ENCODE measurements at regions of chr19 and their contacts with region 1.

Region 1: GRCh38 chr19:55503502-55504251 is 15.4 kb downstream of the SSC5D start:
- DNase-seq: peak; percentile 86 to 98 (median 93)
- ATAC-seq: peak; percentile 94
- H3K4me3 ChIP-seq: peak overlapping the region; percentile 57 to 66
- H3K4me3 Mint-ChIP-seq: peak overlapping the region; percentile 77
- H3K27ac ChIP-seq: peak overlapping the region; percentile 49 to 75
- H3K27ac Mint-ChIP-seq: peak overlapping the region; percentile 80
- H3K4me1 ChIP-seq: peaks cover 4% of the 10 kb centered on the region
- H3K4me1 Mint-ChIP-seq: peaks cover 12% of the 10 kb centered on the region
- H3K27me3 ChIP-seq: peaks cover 0 to 2% of the 10 kb centered on the region in 2 experiments
- H3K27me3 Mint-ChIP-seq: peaks cover 2% of the 10 kb centered on the region
- CTCF ChIP-seq: peak; percentile 99

Region 2: GRCh38 chr19:54882758-54883157 is 620.9 kb before region 1 on chr19:
- CTCF ChIA-PET with region 1: no interaction called
- POLR2A ChIA-PET with region 1: no interaction called
- intact Hi-C with region 1: loop called in 1 of 2 experiments (anchors 5 kb)
- DNase-seq: peak in 2 of 9 experiments; percentile 48 to 67
- ATAC-seq: no peak
- H3K4me3 ChIP-seq: no peak overlapping the region
- H3K4me3 Mint-ChIP-seq: no peak overlapping the region
- H3K27ac ChIP-seq: peak overlapping the region in 1 of 2 experiments; percentile 59
- H3K27ac Mint-ChIP-seq: no peak overlapping the region
- H3K4me1 ChIP-seq: no peaks in the 10 kb centered on the region
- H3K4me1 Mint-ChIP-seq: peaks cover 4% of the 10 kb centered on the region
- H3K27me3 ChIP-seq: no peaks in the 10 kb centered on the region
- H3K27me3 Mint-ChIP-seq: peaks cover 31% of the 10 kb centered on the region
- CTCF ChIP-seq: no peak

Region 3: DNA sequence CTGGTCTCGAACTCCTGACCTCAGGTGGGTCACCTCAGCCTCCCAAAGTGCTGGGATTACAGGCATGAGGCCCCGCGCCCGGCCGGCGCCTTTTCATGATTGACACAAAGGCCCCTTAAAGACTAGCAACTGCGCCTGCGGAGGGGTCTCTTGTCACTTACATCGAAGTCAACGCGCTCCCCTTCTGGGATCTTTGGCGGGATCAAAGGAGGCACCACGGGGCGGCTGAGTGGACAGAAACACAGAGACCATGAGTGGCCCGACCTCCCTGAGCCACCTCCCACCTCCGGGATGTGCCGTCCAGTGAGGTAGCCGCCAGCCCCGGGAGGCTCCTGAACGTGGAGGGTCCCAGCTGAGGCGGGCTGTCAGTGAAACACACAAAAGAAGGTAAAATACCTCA is 362.0 kb before region 1 on chr19:
- CTCF ChIA-PET with region 1: interaction called, 65 read pairs
- POLR2A ChIA-PET with region 1: interaction called, 5 read pairs
- intact Hi-C with region 1: loop called in 1 of 2 experiments (anchors 1 kb)
- DNase-seq: no peak
- ATAC-seq: no peak
- H3K4me3 ChIP-seq: no peak overlapping the region
- H3K4me3 Mint-ChIP-seq: no peak overlapping the region
- H3K27ac ChIP-seq: no peak overlapping the region
- H3K27ac Mint-ChIP-seq: no peak overlapping the region
- H3K4me1 ChIP-seq: peaks cover 6% of the 10 kb centered on the region
- H3K4me1 Mint-ChIP-seq: peaks cover 3% of the 10 kb centered on the region
- H3K27me3 ChIP-seq: peaks cover 22 to 58% of the 10 kb centered on the region in 2 experiments
- H3K27me3 Mint-ChIP-seq: peaks cover 47% of the 10 kb centered on the region
- CTCF ChIP-seq: no peak

Region 4: GRCh38 chr19:55461259-55461973 is 42.3 kb before region 1 on chr19 and contains the start of gene ISOC2:
- CTCF ChIA-PET with region 1: interaction called, 72 read pairs
- POLR2A ChIA-PET with region 1: interaction called, 4 read pairs
- intact Hi-C with region 1: no loop called
- DNase-seq: peak; percentile 100
- ATAC-seq: peak; percentile 96
- H3K4me3 ChIP-seq: peak within 1 kb of the TSS; percentile 90 to 95
- H3K4me3 Mint-ChIP-seq: peak within 1 kb of the TSS; percentile 83
- H3K27ac ChIP-seq: peak within 1 kb of the TSS; percentile 70 to 87
- H3K27ac Mint-ChIP-seq: peak within 1 kb of the TSS; percentile 58
- H3K4me1 ChIP-seq: peaks cover 17% of the 10 kb centered on the region
- H3K4me1 Mint-ChIP-seq: peaks cover 19% of the 10 kb centered on the region
- H3K27me3 ChIP-seq: no peaks in the 10 kb centered on the region
- H3K27me3 Mint-ChIP-seq: no peaks in the 10 kb centered on the region
- CTCF ChIP-seq: no peak
- total RNA-seq, gene ISOC2: 1.5 to 2.1 TPM

Region 5: DNA sequence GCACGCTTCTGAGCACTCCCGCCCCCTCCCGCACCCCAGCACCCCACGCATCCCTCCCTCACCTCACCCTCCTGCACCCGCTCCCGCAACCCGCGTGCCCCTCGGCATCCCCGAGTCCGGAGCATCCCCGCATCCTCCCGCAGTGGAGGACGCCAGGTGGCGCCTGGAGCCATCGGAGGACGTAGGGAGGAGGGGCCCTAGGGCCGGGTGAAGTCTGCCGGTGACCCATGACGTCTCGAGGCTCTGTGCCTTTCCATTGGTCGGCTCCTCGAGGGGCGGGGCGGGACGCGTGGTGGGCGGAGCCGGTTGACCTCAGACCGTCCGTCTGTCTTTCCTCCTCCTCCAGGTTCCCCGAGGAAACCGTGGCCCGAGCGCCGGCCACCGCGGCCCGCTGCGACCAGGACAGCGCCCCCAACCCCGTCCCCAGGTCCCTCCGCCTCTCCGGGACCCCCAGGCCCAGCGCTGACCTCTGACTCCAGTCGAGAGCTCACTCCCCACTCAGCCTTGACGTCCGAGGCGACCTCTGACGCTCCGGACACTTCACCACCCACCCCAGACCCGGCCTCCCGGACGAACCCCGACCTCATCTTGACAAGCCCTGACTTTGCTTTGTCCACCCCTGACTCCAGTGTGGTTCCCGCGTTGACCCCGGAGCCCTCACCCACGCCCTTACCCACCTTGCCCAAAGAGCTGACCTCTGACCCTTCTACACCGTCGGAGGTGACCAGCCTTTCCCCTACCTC is 13.4 kb after region 1 on chr19:
- CTCF ChIA-PET with region 1: interaction called, 15 read pairs
- POLR2A ChIA-PET with region 1: no interaction called
- intact Hi-C with region 1: no loop called
- DNase-seq: peak; percentile 77 to 95 (median 90)
- ATAC-seq: peak; percentile 100
- H3K4me3 ChIP-seq: peak overlapping the region; percentile 12 to 60
- H3K4me3 Mint-ChIP-seq: peak overlapping the region; percentile 79
- H3K27ac ChIP-seq: peak overlapping the region; percentile 40 to 74
- H3K27ac Mint-ChIP-seq: peak overlapping the region; percentile 61
- H3K4me1 ChIP-seq: peaks cover 5% of the 10 kb centered on the region
- H3K4me1 Mint-ChIP-seq: peaks cover 3% of the 10 kb centered on the region
- H3K27me3 ChIP-seq: no peaks in the 10 kb centered on the region
- H3K27me3 Mint-ChIP-seq: peaks cover 2% of the 10 kb centered on the region
- CTCF ChIP-seq: peak; percentile 76

Region 6: GRCh38 chr19:55632463-55632834 is 128.8 kb after region 1 on chr19:
- CTCF ChIA-PET with region 1: interaction called, 38 read pairs
- POLR2A ChIA-PET with region 1: interaction called, 3 read pairs
- intact Hi-C with region 1: no loop called
- DNase-seq: peak; percentile 72 to 95 (median 89)
- ATAC-seq: peak; percentile 46
- H3K4me3 ChIP-seq: no peak overlapping the region
- H3K4me3 Mint-ChIP-seq: peak overlapping the region; percentile 23
- H3K27ac ChIP-seq: no peak overlapping the region
- H3K27ac Mint-ChIP-seq: peak overlapping the region; percentile 63
- H3K4me1 ChIP-seq: peaks cover 31% of the 10 kb centered on the region
- H3K4me1 Mint-ChIP-seq: peaks cover 40% of the 10 kb centered on the region
- H3K27me3 ChIP-seq: no peaks in the 10 kb centered on the region
- H3K27me3 Mint-ChIP-seq: no peaks in the 10 kb centered on the region
- CTCF ChIP-seq: peak; percentile 45